ENCODE measurements at regions of chr14 and their contacts with region 1.

Region 1: GRCh38 chr14:73851644-73852382 is at the start of gene PTGR2:
- H3K4me3 Mint-ChIP-seq: peak within 1 kb of the TSS; percentile 88
- H3K27ac Mint-ChIP-seq: peak within 1 kb of the TSS; percentile 98
- H3K4me1 Mint-ChIP-seq: peaks cover 30% of the 10 kb centered on the region
- H3K27me3 Mint-ChIP-seq: no peaks in the 10 kb centered on the region

Region 2: GRCh38 chr14:73136387-73137225 is 715.2 kb before region 1 on chr14 and contains the start of gene PSEN1:
- intact Hi-C with region 1: loop called (anchors 5 kb)
- H3K4me3 Mint-ChIP-seq: peak within 1 kb of the TSS; percentile 89
- H3K27ac Mint-ChIP-seq: peak within 1 kb of the TSS; percentile 100
- H3K4me1 Mint-ChIP-seq: peaks cover 21% of the 10 kb centered on the region
- H3K27me3 Mint-ChIP-seq: no peaks in the 10 kb centered on the region

Region 3: DNA sequence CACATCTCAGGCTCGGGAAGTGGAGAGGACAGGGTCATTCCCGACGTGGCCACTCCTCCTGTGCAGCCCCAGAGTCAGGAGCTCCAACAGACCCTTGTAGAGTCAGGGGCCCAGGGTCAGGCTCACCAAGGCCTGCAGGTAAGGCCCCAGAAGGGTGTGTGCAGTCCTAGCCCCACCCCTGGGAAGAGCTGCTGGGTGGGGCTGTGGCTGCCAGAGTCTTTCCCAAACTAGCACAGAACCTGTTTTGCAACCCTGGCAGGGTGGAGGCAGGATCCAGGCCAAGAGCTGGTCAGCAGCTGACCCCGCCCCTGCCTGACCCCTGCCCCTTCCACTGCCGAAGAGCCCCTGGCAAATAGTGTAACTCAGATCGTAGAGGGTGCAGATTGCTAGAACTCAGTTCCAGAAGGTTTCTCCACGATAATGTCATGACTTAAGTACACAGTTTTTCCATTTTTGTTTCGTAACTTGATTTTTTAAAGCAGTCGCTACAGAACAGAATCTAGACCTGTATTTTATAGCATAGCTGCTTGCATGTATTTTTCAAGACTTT is 111.0 kb before region 1 on chr14:
- intact Hi-C with region 1: no loop called
- H3K4me3 Mint-ChIP-seq: peak overlapping the region; percentile 58
- H3K27ac Mint-ChIP-seq: peak overlapping the region; percentile 72
- H3K4me1 Mint-ChIP-seq: peaks cover 70% of the 10 kb centered on the region
- H3K27me3 Mint-ChIP-seq: no peaks in the 10 kb centered on the region

Region 4: DNA sequence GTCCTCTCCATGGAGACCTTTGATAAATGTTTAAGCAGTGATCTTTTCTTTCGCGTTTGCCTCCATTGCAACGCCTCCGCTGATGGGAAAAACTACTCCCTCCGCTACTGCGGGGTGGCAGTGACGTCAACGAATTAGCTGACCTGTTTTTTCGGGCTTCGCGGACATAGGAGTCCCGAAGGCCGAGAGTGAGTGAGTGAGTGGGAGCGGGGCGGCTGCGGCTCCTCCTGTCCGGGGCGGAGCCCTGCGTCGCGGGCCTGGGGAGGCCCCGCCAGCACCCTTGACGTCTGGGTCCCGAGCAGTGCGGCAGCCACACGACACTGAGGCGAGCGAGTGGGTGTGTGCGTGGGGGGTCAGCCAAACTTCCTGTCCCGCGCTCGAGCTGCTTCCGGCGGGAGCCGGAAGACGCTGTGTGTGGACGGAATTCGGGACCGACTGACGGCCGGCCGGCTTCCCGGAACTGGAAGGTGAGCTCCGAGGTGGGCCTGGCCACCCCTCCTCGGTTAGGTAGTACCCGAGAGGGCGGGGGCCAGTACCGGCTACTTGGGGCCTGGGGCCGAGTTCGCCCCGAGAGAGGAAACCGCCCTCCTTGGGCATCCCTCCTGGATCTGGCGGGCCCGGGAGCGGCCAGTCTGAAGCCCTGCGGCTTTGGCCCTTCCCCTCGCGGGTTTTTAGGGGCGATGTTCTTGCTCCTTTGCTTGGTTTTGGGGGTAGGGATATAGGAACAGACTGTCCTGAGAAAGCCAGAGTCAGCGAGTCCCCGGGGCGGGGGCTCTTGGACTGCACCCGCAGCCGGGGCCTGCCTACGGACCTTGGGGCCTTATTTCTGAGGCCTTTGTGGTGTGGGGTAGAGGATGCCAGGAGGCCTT is 34.9 kb after region 1 on chr14 and contains the start of gene ZNF410:
- intact Hi-C with region 1: loop called (anchors 1 kb)
- H3K4me3 Mint-ChIP-seq: peak within 1 kb of the TSS; percentile 88
- H3K27ac Mint-ChIP-seq: peak within 1 kb of the TSS; percentile 97
- H3K4me1 Mint-ChIP-seq: peaks cover 38% of the 10 kb centered on the region
- H3K27me3 Mint-ChIP-seq: no peaks in the 10 kb centered on the region